ENCODE measurements at regions of chr13 and their contacts with region 1.

Region 1: GRCh38 chr13:78241278-78241919 is 322.8 kb upstream of the EDNRB start:
- DNase-seq: peak; percentile 51
- ATAC-seq: peak; percentile 45; the same call in 1 of the 2 replicates
- H3K4me3 ChIP-seq: no peak overlapping the region
- H3K27ac ChIP-seq: no peak overlapping the region
- H3K4me1 ChIP-seq: no peaks in the 10 kb centered on the region
- H3K27me3 ChIP-seq: peaks cover 5% of the 10 kb centered on the region
- CTCF ChIP-seq: peak; percentile 71

Region 2: DNA sequence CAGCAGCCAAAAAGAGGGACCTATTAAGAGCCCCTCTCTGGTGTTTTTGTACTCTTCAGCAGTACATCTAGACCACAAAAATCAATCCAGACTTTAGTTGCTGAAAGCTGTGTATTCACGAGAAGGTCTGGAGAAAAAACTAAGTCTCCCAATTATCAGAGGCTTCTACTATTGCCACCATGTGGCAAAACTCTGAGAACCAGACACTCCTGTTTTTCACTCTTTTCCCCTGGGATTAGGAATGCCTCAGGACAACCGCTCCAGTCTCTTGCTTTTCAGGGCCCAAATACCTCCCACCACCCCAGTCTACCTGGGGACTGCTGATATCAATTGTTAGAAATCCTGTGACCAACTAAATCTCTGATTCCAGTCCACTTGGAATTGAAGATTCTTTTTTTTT is 447.6 kb after region 1 on chr13:
- CTCF ChIA-PET with region 1: no interaction called
- POLR2A ChIA-PET with region 1: no interaction called
- intact Hi-C with region 1: loop called (anchors 5 kb)
- DNase-seq: peak; percentile 12
- ATAC-seq: peak; percentile 54
- H3K4me3 ChIP-seq: no peak overlapping the region
- H3K27ac ChIP-seq: no peak overlapping the region
- H3K4me1 ChIP-seq: no peaks in the 10 kb centered on the region
- H3K27me3 ChIP-seq: 0 out of 2 replicates have a peak, but pooled peaks cover 4% of the 10 kb centered on the region
- CTCF ChIP-seq: 0 out of 2 replicates have a peak, but pooled peaks have one; percentile 15

Region 3: DNA sequence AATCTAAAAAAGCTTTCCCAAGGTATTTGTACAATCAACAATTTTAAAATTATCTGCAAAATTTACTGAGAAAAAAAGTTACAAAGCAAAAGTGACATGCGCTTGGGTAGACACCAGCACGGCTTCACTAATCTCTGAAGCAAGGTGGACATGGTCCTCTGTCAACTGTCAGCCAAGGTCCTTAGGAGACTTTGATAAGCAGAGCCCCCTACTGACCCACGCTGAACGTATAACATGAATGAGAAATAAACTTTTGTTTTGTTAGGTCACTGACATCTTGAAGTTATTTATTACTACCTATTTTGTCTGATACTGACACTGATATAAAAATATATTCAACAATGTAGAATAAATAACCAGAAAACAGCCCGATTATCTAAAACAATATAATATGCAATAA is 518.3 kb after region 1 on chr13:
- CTCF ChIA-PET with region 1: no interaction called
- POLR2A ChIA-PET with region 1: no interaction called
- intact Hi-C with region 1: loop called (anchors 10 kb)
- DNase-seq: no peak
- ATAC-seq: no peak
- H3K4me3 ChIP-seq: no peak overlapping the region
- H3K27ac ChIP-seq: no peak overlapping the region
- H3K4me1 ChIP-seq: no peaks in the 10 kb centered on the region
- H3K27me3 ChIP-seq: peaks cover 66% of the 10 kb centered on the region
- CTCF ChIP-seq: 0 out of 2 replicates have a peak, but pooled peaks have one; percentile 14

Region 4: DNA sequence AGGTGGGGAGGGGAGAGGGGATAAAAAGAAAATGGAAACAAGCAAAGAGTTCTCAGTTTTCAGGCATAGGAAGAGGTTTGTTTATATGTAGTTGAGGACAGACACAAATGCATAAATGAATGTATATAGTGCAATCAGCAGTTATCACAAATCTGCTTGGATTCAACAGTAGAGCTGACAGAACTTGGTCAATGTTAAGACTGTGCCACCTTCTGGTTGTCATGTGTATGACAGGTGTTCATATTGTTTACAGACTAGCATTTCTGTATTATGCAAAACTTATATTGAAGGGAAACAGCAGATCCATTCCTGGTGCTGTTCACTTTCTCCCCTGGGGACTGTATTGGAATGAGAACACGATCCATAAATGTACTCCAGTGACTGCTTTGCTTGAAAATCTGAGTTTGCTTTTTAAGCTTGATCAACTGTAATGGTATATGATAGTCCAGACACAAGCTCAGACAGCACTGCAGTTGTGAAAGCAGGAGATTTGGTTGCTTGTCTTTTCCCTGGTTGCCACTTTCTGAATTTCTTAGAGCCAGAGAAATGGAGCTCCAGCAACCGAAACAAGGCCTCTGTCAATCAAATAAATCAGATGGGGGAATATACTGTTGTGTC is 737.1 kb after region 1 on chr13:
- CTCF ChIA-PET with region 1: interaction called, 5 read pairs
- POLR2A ChIA-PET with region 1: no interaction called
- intact Hi-C with region 1: loop called (anchors 2 kb)
- DNase-seq: peak; percentile 68
- ATAC-seq: peak; percentile 76
- H3K4me3 ChIP-seq: no peak overlapping the region
- H3K27ac ChIP-seq: no peak overlapping the region
- H3K4me1 ChIP-seq: no peaks in the 10 kb centered on the region
- H3K27me3 ChIP-seq: peaks cover 40% of the 10 kb centered on the region
- CTCF ChIP-seq: peak; percentile 66

Measured in PC-3 (cell line).